GM12878 (cell line): ENCODE measurements at regions of chr3 and their contacts with region 1.

Region 1: GRCh38 chr3:165783383-165783782 is 53.8 kb downstream of the BCHE start:
- DNase-seq: no peak
- ATAC-seq: no peak
- H3K4me3 ChIP-seq: no peak overlapping the region
- H3K27ac ChIP-seq: no peak overlapping the region
- H3K4me1 ChIP-seq: no peaks in the 10 kb centered on the region
- H3K27me3 ChIP-seq: no peaks in the 10 kb centered on the region
- CTCF ChIP-seq: no peak
- EP300 ChIP-seq: no peak
- POLR2A ChIP-seq: no peak
- RAD21 ChIP-seq: no peak

Region 2: DNA sequence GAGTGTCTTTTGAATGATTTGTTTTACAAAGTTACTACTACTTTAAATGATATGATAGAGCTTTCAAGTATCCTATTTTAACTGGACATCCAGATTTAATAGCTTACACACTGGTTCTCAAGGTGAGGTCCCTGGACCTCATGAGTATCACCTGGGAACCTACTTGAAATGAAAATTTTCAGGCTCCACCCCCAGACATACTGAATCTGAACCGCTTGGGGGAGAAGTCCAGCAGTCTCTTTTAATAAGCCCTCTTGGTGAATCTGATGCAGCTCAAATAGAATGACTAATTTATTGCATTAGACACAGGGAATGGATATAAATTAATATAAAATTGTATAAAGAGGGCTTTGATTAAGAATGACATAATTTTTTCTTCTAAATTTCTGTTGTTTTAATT is 557.8 kb before region 1 on chr3:
- CTCF ChIA-PET with region 1: no interaction called
- POLR2A ChIA-PET with region 1: no interaction called
- RAD21 ChIA-PET with region 1: no interaction called
- SMC1A ChIA-PET with region 1: no interaction called
- in situ Hi-C with region 1: no loop called
- intact Hi-C with region 1: no loop called
- DNase-seq: no peak
- ATAC-seq: no peak
- H3K4me3 ChIP-seq: no peak overlapping the region
- H3K27ac ChIP-seq: no peak overlapping the region
- H3K4me1 ChIP-seq: no peaks in the 10 kb centered on the region
- H3K27me3 ChIP-seq: no peaks in the 10 kb centered on the region
- CTCF ChIP-seq: no peak
- EP300 ChIP-seq: no peak
- POLR2A ChIP-seq: no peak
- RAD21 ChIP-seq: no peak

Region 3: GRCh38 chr3:165383381-165383780 is 400.0 kb before region 1 on chr3:
- CTCF ChIA-PET with region 1: no interaction called
- POLR2A ChIA-PET with region 1: no interaction called
- RAD21 ChIA-PET with region 1: no interaction called
- SMC1A ChIA-PET with region 1: no interaction called
- in situ Hi-C with region 1: no loop called
- intact Hi-C with region 1: no loop called
- DNase-seq: no peak
- ATAC-seq: no peak
- H3K4me3 ChIP-seq: no peak overlapping the region
- H3K27ac ChIP-seq: no peak overlapping the region
- H3K4me1 ChIP-seq: no peaks in the 10 kb centered on the region
- H3K27me3 ChIP-seq: no peaks in the 10 kb centered on the region
- CTCF ChIP-seq: no peak
- EP300 ChIP-seq: no peak
- POLR2A ChIP-seq: no peak
- RAD21 ChIP-seq: no peak

Region 4: GRCh38 chr3:165768680-165769079 is 14.7 kb before region 1 on chr3:
- CTCF ChIA-PET with region 1: interaction called, 4 read pairs
- POLR2A ChIA-PET with region 1: no interaction called
- RAD21 ChIA-PET with region 1: interaction called, 3 read pairs
- SMC1A ChIA-PET with region 1: interaction called, 14 read pairs
- in situ Hi-C with region 1: no loop called
- intact Hi-C with region 1: no loop called
- DNase-seq: no peak
- ATAC-seq: peak; percentile 25
- H3K4me3 ChIP-seq: no peak overlapping the region
- H3K27ac ChIP-seq: no peak overlapping the region
- H3K4me1 ChIP-seq: no peaks in the 10 kb centered on the region
- H3K27me3 ChIP-seq: no peaks in the 10 kb centered on the region
- CTCF ChIP-seq: no peak
- EP300 ChIP-seq: no peak
- POLR2A ChIP-seq: no peak
- RAD21 ChIP-seq: no peak

Region 5: GRCh38 chr3:165800970-165801369 is 17.6 kb after region 1 on chr3:
- CTCF ChIA-PET with region 1: interaction called, 7 read pairs
- POLR2A ChIA-PET with region 1: interaction called, 13 read pairs
- RAD21 ChIA-PET with region 1: interaction called, 67 read pairs
- SMC1A ChIA-PET with region 1: interaction called, 104 read pairs
- in situ Hi-C with region 1: no loop called
- intact Hi-C with region 1: no loop called
- DNase-seq: no peak
- ATAC-seq: peak; percentile 63
- H3K4me3 ChIP-seq: no peak overlapping the region
- H3K27ac ChIP-seq: no peak overlapping the region
- H3K4me1 ChIP-seq: no peaks in the 10 kb centered on the region
- H3K27me3 ChIP-seq: no peaks in the 10 kb centered on the region
- CTCF ChIP-seq: no peak
- EP300 ChIP-seq: no peak
- POLR2A ChIP-seq: no peak
- RAD21 ChIP-seq: no peak